ACHN (cell line): ENCODE measurements at regions of chr16 and their contacts with region 1.

Region 1: DNA sequence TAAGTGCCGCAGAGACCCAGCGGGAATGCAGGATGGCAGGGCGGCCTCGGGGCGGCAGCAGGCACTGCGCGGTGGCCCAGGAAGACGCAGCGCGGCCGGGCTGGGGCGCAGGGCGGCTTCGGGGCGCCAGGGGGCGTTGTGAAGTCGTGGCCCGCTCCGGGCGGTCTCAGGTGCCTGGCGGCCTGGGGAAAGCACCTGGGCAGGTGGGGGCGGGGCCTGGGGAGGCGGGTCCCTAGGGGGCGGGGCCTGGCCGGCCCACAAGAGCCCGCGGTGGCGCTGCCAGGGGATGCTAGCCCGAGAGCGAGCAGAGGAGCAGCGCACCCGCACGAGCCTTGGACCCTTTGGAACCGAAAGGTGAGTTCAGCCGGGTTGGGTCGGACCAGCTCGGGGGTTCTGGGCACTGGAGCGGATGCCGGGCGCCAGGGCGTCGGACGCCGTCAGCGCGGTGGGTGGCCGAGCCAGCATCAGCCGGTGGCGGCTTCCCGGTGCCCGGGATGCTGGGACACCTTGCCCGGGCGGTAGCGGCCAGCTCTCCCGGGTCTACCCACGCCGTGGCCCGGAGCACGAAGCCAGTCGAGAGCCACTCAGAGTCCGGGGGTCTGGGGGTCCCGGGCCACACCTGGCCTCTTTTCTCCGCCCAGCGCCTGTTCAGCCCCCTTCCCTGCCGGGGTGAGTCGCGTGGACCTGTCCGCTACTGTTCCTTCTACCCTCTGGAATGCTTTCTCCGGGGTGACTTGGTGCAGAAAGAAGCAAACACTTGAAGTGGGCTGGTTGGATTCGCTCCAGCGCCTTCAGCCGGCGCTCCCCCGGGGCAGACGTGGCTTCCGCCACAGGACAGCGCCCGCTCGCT is at the start of gene SCNN1G:
- DNase-seq: peak; percentile 79

Region 2: GRCh38 chr16:23145608-23146007 is 37.1 kb before region 1 on chr16:
- in situ Hi-C with region 1: no loop called
- DNase-seq: peak; percentile 96

Region 3: GRCh38 chr16:23232806-23233205 is 50.1 kb after region 1 on chr16:
- in situ Hi-C with region 1: no loop called
- DNase-seq: no peak

Region 4: GRCh38 chr16:23435500-23435899 is 252.8 kb after region 1 on chr16:
- in situ Hi-C with region 1: loop called (anchors 25 kb)
- DNase-seq: peak; percentile 77